CD8-positive, alpha-beta T cell (primary cell): ENCODE measurements at regions of chr15 and their contacts with region 1.

Region 1: GRCh38 chr15:60592371-60593169 is 113.6 kb upstream of the ICE2 start:
- DNase-seq: peak; percentile 71 to 93 (median 87)
- ATAC-seq: peak; percentile 88
- H3K4me3 ChIP-seq: peak overlapping the region; percentile 71 to 81
- H3K4me3 Mint-ChIP-seq: peak overlapping the region; percentile 84
- H3K27ac ChIP-seq: peak overlapping the region; percentile 75 to 83
- H3K27ac Mint-ChIP-seq: peak overlapping the region; percentile 88
- H3K4me1 ChIP-seq: peaks cover 33% of the 10 kb centered on the region
- H3K4me1 Mint-ChIP-seq: peaks cover 35% of the 10 kb centered on the region
- H3K27me3 ChIP-seq: no peaks in the 10 kb centered on the region
- H3K27me3 Mint-ChIP-seq: no peaks in the 10 kb centered on the region
- CTCF ChIP-seq: no peak

Region 2: GRCh38 chr15:60397772-60398445 is 194.7 kb before region 1 on chr15 and contains the start of gene ANXA2:
- CTCF ChIA-PET with region 1: no interaction called
- POLR2A ChIA-PET with region 1: interaction called, 5 read pairs
- intact Hi-C with region 1: loop called in 1 of 2 experiments (anchors 2 kb)
- DNase-seq: peak; percentile 61 to 91 (median 85)
- ATAC-seq: peak; percentile 85
- H3K4me3 ChIP-seq: peak within 1 kb of the TSS; percentile 63 to 66
- H3K4me3 Mint-ChIP-seq: peak within 1 kb of the TSS; percentile 85
- H3K27ac ChIP-seq: peak within 1 kb of the TSS; percentile 50 to 68
- H3K27ac Mint-ChIP-seq: peak within 1 kb of the TSS; percentile 87
- H3K4me1 ChIP-seq: peaks cover 14% of the 10 kb centered on the region
- H3K4me1 Mint-ChIP-seq: peaks cover 31% of the 10 kb centered on the region
- H3K27me3 ChIP-seq: peaks cover 0 to 3% of the 10 kb centered on the region in 2 experiments
- H3K27me3 Mint-ChIP-seq: no peaks in the 10 kb centered on the region
- CTCF ChIP-seq: no peak
- total RNA-seq, gene ANXA2: 25.8 to 31.7 TPM

Region 3: DNA sequence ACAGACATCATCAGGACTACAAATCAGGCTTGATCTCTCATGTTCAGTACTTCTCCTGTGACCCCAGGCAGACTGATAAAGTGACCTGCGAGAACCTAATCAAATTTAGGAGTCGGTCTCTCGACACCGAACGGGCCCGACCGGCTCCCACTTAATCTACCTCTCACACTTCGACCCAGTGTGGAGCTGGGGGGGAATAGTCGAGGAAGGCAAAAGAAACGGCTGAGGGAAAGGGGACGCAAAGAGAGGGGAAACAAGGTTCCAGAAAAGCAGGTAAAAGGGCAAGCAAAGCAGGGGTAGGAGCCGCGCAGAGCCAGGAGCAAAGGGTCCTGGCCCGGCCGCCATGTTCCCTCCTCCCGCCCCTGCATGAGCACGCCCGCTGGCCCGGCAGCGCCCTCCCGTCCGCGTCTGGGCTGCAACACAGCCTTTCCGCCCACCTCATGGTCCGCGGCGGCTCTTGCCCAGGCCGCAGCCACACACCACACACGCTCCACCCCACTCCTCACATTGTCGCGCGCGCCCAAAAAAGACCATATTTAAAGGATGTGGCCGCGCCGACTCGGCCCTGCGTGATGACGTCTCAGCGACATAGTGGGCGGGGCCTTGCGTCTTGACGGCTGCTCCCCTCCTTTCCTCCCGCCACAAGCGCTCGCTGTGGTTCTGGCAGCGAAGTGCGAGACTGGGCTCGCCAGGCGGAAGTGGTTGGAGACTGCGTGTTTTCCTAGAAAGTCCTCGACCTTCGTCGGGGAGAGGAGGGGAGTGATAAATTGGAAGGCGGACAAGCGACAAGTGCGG is 113.8 kb before region 1 on chr15 and contains the start of gene ICE2:
- CTCF ChIA-PET with region 1: no interaction called
- POLR2A ChIA-PET with region 1: interaction called, 3 read pairs
- intact Hi-C with region 1: loop called in 1 of 2 experiments (anchors 2 kb)
- DNase-seq: peak; percentile 88 to 98 (median 96)
- ATAC-seq: peak; percentile 90
- H3K4me3 ChIP-seq: peak within 1 kb of the TSS; percentile 68 to 89
- H3K4me3 Mint-ChIP-seq: peak within 1 kb of the TSS; percentile 98
- H3K27ac ChIP-seq: peak within 1 kb of the TSS; percentile 85 to 92
- H3K27ac Mint-ChIP-seq: peak within 1 kb of the TSS; percentile 100
- H3K4me1 ChIP-seq: peaks cover 39% of the 10 kb centered on the region
- H3K4me1 Mint-ChIP-seq: peaks cover 72% of the 10 kb centered on the region
- H3K27me3 ChIP-seq: no peaks in the 10 kb centered on the region
- H3K27me3 Mint-ChIP-seq: no peaks in the 10 kb centered on the region
- CTCF ChIP-seq: no peak
- total RNA-seq, gene ICE2: 13.9 to 18.3 TPM

Region 4: GRCh38 chr15:60507596-60508424 is 84.8 kb before region 1 on chr15:
- CTCF ChIA-PET with region 1: interaction called, 12 read pairs
- POLR2A ChIA-PET with region 1: no interaction called
- intact Hi-C with region 1: no loop called
- DNase-seq: peak in 8 of 9 experiments; percentile 18 to 89 (median 52)
- ATAC-seq: peak; percentile 83
- H3K4me3 ChIP-seq: no peak overlapping the region
- H3K4me3 Mint-ChIP-seq: no peak overlapping the region
- H3K27ac ChIP-seq: peak overlapping the region in 1 of 2 experiments; percentile 52
- H3K27ac Mint-ChIP-seq: peak overlapping the region; percentile 47
- H3K4me1 ChIP-seq: peaks cover 33% of the 10 kb centered on the region
- H3K4me1 Mint-ChIP-seq: peaks cover 52% of the 10 kb centered on the region
- H3K27me3 ChIP-seq: no peaks in the 10 kb centered on the region
- H3K27me3 Mint-ChIP-seq: no peaks in the 10 kb centered on the region
- CTCF ChIP-seq: peak; percentile 86

Region 5: DNA sequence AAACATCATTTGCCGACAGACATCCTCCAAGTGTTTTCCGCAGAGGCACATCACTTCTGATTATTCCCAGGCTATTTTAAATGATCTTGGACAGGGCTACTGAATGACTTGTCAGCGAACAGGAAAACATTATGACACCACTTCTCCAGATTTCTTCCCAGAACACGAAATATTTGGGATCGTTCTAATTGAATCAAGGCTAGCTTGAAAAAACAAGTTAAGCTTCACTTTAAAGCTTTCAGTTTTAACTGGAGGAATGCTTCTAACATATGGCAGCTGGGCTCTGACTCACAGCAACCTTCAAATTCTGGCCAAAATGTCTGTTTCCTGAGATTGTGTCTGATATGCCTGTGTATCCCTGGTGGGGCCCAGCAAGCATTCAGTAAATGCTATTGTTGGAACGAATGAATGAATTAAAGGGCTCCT is 13.3 kb after region 1 on chr15:
- CTCF ChIA-PET with region 1: no interaction called
- POLR2A ChIA-PET with region 1: no interaction called
- intact Hi-C with region 1: no loop called
- DNase-seq: no peak
- ATAC-seq: no peak
- H3K4me3 ChIP-seq: no peak overlapping the region
- H3K4me3 Mint-ChIP-seq: no peak overlapping the region
- H3K27ac ChIP-seq: no peak overlapping the region
- H3K27ac Mint-ChIP-seq: no peak overlapping the region
- H3K4me1 ChIP-seq: peaks cover 4% of the 10 kb centered on the region
- H3K4me1 Mint-ChIP-seq: peaks cover 10% of the 10 kb centered on the region
- H3K27me3 ChIP-seq: peaks cover 0 to 1% of the 10 kb centered on the region in 2 experiments
- H3K27me3 Mint-ChIP-seq: no peaks in the 10 kb centered on the region
- CTCF ChIP-seq: no peak

Region 6: DNA sequence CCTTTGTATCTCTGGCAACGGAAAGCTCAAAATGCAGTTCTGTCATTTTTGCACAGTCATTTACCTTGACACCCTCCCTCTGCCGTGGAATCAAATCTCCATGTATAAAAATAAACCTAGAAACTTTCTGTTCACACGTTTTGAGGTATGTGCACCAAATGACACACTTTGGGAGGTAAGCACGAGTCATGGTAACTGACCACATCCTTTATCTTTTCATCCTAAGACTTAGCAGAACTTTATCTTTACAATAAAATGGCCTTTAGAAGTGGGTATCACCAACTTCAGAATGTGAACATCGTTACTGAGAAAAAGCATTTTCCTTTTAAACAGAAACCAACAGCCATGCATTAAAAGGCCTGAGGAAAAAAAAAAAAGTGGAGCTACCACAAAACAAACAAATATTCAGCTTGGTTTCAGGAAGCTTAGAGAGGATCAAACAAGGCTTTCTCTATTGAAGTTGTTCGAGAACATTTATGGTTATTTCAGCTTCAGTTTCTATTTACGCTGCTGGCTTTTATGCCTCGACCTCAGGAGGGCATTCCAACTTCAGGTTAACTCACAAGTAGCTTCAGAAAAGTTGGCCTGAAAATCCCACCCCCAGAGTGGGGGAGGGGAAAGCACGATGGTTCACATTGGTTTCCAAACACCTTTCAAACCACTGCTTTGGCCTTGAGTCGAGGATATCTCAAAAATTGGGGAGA is 57.4 kb after region 1 on chr15:
- CTCF ChIA-PET with region 1: interaction called, 4 read pairs
- POLR2A ChIA-PET with region 1: interaction called, 3 read pairs
- intact Hi-C with region 1: loop called (anchors 1 to 5 kb)
- DNase-seq: peak in 4 of 9 experiments; percentile 19 to 89 (median 57)
- ATAC-seq: peak; percentile 85
- H3K4me3 ChIP-seq: peak overlapping the region; percentile 5 to 23
- H3K4me3 Mint-ChIP-seq: peak overlapping the region; percentile 75
- H3K27ac ChIP-seq: peak overlapping the region; percentile 37 to 71
- H3K27ac Mint-ChIP-seq: peak overlapping the region; percentile 79
- H3K4me1 ChIP-seq: peaks cover 26% of the 10 kb centered on the region
- H3K4me1 Mint-ChIP-seq: peaks cover 36% of the 10 kb centered on the region
- H3K27me3 ChIP-seq: no peaks in the 10 kb centered on the region
- H3K27me3 Mint-ChIP-seq: no peaks in the 10 kb centered on the region
- CTCF ChIP-seq: no peak

Region 7: DNA sequence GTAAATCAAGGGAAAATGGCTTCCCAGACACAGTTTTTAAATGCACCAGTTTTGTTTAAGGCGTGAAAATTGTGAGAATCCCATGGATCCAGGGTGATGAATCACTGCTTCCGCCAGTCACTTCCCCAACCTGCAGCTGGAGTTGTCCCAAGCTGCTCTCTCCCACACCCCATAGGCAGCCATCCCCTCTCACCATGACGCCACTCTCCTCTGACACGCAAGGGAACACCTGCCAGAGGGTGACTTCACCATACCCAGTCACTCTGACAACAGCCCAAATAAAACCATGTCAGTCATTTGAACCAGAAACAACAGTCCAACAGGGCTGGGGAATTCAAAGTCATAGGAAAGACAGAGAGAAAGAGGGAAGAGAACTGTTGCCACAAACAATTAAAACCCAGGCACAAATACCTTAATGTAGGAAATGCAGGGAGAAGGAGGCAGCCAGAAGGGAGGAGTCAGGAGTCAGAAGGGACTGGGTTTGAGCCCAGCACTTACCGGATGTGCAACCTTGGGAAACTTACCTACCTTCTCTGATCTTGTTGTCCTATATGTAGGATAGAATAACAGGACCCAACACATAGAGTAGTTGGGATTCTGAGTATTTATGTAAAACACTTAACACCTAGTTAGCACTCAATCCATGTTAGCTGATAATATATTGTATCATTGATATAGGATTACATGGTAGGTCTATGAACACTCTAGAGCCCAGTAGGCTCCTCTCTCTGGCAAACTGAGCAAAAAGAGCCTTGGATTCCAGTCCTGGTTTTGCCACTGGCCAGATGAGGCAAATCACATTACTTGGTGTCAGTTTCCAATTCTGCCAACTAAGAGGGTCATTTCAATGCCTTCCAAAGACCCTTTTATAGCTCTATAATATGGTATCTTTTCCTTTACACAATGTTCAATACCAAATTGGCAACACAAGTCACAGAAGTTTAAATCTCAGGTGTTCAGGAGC is 212.7 kb after region 1 on chr15:
- CTCF ChIA-PET with region 1: no interaction called
- POLR2A ChIA-PET with region 1: no interaction called
- intact Hi-C with region 1: loop called in 1 of 2 experiments (anchors 5 kb)
- DNase-seq: no peak
- ATAC-seq: no peak
- H3K4me3 ChIP-seq: no peak overlapping the region
- H3K4me3 Mint-ChIP-seq: no peak overlapping the region
- H3K27ac ChIP-seq: no peak overlapping the region
- H3K27ac Mint-ChIP-seq: no peak overlapping the region
- H3K4me1 ChIP-seq: peaks cover 62% of the 10 kb centered on the region
- H3K4me1 Mint-ChIP-seq: peaks cover 67% of the 10 kb centered on the region
- H3K27me3 ChIP-seq: no peaks in the 10 kb centered on the region
- H3K27me3 Mint-ChIP-seq: no peaks in the 10 kb centered on the region
- CTCF ChIP-seq: no peak

Region 8: GRCh38 chr15:60840306-60840702 is 247.7 kb after region 1 on chr15:
- CTCF ChIA-PET with region 1: interaction called, 33 read pairs
- POLR2A ChIA-PET with region 1: interaction called, 15 read pairs
- intact Hi-C with region 1: loop called in 1 of 2 experiments (anchors 5 kb)
- DNase-seq: peak in 4 of 9 experiments; percentile 4 to 55 (median 28)
- ATAC-seq: no peak
- H3K4me3 ChIP-seq: peak overlapping the region; percentile 43
- H3K4me3 Mint-ChIP-seq: peak overlapping the region; percentile 86
- H3K27ac ChIP-seq: peak overlapping the region; percentile 51 to 84
- H3K27ac Mint-ChIP-seq: peak overlapping the region; percentile 96
- H3K4me1 ChIP-seq: peaks cover 60% of the 10 kb centered on the region
- H3K4me1 Mint-ChIP-seq: peaks cover 82% of the 10 kb centered on the region
- H3K27me3 ChIP-seq: no peaks in the 10 kb centered on the region
- H3K27me3 Mint-ChIP-seq: no peaks in the 10 kb centered on the region
- CTCF ChIP-seq: no peak

Region 9: GRCh38 chr15:60933900-60934895 is 341.6 kb after region 1 on chr15:
- CTCF ChIA-PET with region 1: no interaction called
- POLR2A ChIA-PET with region 1: no interaction called
- intact Hi-C with region 1: no loop called
- DNase-seq: peak in 2 of 9 experiments; percentile 13 to 40
- ATAC-seq: no peak
- H3K4me3 ChIP-seq: no peak overlapping the region
- H3K4me3 Mint-ChIP-seq: no peak overlapping the region
- H3K27ac ChIP-seq: no peak overlapping the region
- H3K27ac Mint-ChIP-seq: no peak overlapping the region
- H3K4me1 ChIP-seq: peaks cover 8% of the 10 kb centered on the region
- H3K4me1 Mint-ChIP-seq: peaks cover 7% of the 10 kb centered on the region
- H3K27me3 ChIP-seq: no peaks in the 10 kb centered on the region
- H3K27me3 Mint-ChIP-seq: peaks cover 6% of the 10 kb centered on the region
- CTCF ChIP-seq: no peak